Calu3 (cell line): ENCODE measurements at regions of chr9 and their contacts with region 1.

Region 1: GRCh38 chr9:6566409-6567139 is 79.0 kb downstream of the GLDC start:
- DNase-seq: peak; percentile 47
- H3K4me3 Mint-ChIP-seq: no peak overlapping the region
- H3K27ac Mint-ChIP-seq: peak overlapping the region; percentile 85
- H3K4me1 Mint-ChIP-seq: no peaks in the 10 kb centered on the region
- H3K27me3 Mint-ChIP-seq: no peaks in the 10 kb centered on the region
- CTCF ChIP-seq: no peak

Region 2: GRCh38 chr9:6353851-6354686 is 212.5 kb before region 1 on chr9:
- CTCF ChIA-PET with region 1: interaction called, 4 read pairs
- intact Hi-C with region 1: loop called (anchors 1 kb)
- DNase-seq: peak; percentile 21
- H3K4me3 Mint-ChIP-seq: no peak overlapping the region
- H3K27ac Mint-ChIP-seq: no peak overlapping the region
- H3K4me1 Mint-ChIP-seq: no peaks in the 10 kb centered on the region
- H3K27me3 Mint-ChIP-seq: no peaks in the 10 kb centered on the region
- CTCF ChIP-seq: peak; percentile 52

Region 3: DNA sequence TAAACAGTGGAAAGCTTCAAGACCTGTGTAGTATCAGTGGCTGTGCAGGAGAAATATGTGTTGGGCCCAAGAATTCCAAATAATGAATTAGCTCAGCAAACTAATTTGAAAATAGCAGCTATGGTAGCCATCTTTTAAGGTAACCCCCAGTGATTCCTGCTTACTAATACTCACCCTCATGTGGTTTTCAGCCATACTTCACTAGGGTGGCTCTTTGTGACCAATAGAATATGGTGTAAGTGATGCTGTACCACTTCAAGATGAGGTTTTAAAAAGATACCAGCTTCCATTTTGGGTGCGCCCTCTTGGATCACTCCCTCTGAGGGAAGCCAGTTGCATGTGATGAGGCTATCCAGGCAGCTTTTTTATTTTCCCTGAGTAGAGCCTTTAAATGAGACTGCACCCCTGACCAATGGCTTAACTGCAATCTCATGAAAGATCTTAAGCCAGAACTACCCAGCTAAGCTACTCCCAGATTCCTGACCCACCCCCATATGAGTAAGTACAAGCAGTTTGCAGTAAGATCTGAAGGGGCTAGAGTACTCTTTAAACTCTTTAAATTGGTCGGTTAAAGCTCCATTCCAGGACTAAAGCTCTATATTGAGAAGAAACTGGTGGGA is 95.2 kb before region 1 on chr9:
- CTCF ChIA-PET with region 1: no interaction called
- intact Hi-C with region 1: loop called (anchors 5 kb)
- DNase-seq: no peak
- H3K4me3 Mint-ChIP-seq: no peak overlapping the region
- H3K27ac Mint-ChIP-seq: no peak overlapping the region
- H3K4me1 Mint-ChIP-seq: no peaks in the 10 kb centered on the region
- H3K27me3 Mint-ChIP-seq: no peaks in the 10 kb centered on the region
- CTCF ChIP-seq: no peak

Region 4: DNA sequence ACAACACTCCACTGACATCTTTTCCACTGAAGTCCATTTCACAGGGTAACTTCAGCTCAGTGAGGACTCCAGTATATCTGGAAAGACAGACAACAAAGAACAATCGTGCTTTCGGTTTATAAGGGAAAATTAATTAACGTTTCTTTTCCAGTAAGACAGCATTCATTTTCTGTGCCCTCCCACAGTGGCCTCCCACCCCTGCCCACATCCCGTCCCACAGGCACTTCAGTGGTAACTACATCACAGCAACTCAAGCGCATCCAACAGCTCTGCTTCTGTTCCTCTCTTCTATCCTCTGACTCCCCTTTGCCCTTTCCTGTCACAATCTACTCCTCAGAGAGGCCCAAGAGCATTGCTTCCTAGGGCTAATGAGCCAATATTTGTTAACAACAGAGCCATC is 38.6 kb after region 1 on chr9:
- CTCF ChIA-PET with region 1: no interaction called
- intact Hi-C with region 1: no loop called
- DNase-seq: no peak
- H3K4me3 Mint-ChIP-seq: no peak overlapping the region
- H3K27ac Mint-ChIP-seq: no peak overlapping the region
- H3K4me1 Mint-ChIP-seq: no peaks in the 10 kb centered on the region
- H3K27me3 Mint-ChIP-seq: no peaks in the 10 kb centered on the region
- CTCF ChIP-seq: no peak